Lower leg skin (tissue), 4 donors: ENCODE measurements at regions of chr16 and their contacts with region 1.

Region 1: DNA sequence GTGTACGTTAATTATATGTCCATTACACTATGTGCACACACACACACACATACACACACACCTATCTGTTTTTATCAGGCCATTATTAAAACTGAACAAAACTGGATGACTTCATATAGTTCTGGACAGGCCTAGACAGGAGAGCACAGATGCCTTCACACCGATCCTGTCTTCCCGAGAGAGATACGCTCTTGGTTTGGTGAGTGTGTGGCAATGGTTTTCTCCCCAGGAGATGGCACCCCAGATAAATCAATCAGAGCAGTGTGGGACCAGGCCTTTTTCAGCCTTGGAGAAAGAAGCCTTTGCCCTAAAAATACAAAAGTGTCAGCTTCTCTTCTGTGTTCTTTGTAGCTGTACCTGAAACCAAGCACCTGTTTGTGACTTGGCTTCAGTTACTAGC is 83.7 kb downstream of the CPPED1 start:
- DNase-seq: no peak
- H3K4me3 ChIP-seq: no peak overlapping the region
- CTCF ChIP-seq: no peak
- POLR2A ChIP-seq: no peak

Region 2: GRCh38 chr16:11915644-11916523 is 804.1 kb before region 1 on chr16 and contains the start of gene GSPT1:
- intact Hi-C with region 1: loop called (anchors 5 kb)
- DNase-seq: peak; percentile 99 to 100
- H3K4me3 ChIP-seq: peak within 1 kb of the TSS; percentile 93
- CTCF ChIP-seq: peak in 1 of 3 donors; percentile 78
- POLR2A ChIP-seq: peak in 1 of 2 donors; percentile 74
- total RNA-seq, gene GSPT1: 38.6 to 55.3 (median 52.0) TPM

Region 3: DNA sequence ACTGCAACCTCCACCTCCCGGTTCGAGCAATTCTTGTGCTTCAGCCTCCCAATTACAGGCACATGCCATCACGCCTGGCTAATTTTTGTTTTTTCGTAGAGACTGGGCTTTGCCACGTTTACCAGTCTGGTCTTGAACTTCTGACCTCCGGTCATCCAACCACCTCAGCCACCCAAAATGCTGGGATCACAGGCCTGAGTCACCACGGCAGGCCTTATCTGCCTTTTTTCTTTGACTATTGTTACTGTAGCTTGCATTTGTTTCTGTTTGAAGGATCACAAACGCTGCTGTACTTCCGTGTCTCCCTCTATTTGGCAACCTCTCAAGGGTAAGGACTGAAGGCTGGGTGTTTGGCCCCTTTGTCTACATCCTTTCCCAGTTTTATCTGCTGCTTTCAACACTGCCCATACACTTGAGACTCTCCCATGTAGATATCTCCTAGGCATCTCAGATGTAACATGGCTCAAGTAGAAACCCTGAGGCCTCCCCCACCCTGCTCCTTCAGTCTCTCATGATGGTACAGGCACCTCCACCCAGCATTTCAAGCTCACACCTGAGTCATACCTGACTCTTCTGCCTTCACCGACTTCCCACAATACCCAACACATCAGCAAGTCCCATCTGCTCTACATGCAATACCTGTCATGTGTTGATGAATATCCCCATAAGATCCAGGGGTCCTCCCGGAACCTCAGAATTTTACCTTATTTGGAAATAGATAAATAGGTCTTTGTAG is 135.3 kb before region 1 on chr16:
- intact Hi-C with region 1: no loop called
- DNase-seq: no peak
- H3K4me3 ChIP-seq: no peak overlapping the region
- CTCF ChIP-seq: no peak
- POLR2A ChIP-seq: no peak

Region 4: DNA sequence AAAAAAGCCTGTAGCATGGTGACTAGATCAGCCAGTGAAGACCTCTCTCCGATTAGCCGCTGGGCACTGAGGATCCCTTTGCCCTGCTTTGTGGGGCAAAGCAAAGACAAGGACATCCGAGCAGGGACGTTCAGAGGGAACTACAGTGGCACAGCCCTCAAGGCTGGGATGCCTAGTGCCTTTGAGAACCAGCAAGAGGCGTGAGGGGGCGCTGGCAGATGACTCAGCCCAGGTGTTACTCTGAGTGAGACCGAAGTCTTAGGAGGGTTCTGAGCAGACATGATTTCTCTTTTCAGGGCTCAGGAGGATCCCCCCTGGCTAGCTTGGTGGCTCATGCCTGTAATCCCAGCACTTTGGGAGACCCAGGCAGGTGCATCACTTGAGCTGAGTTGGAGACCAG is 94.9 kb before region 1 on chr16:
- intact Hi-C with region 1: no loop called
- DNase-seq: no peak
- H3K4me3 ChIP-seq: no peak overlapping the region
- CTCF ChIP-seq: no peak
- POLR2A ChIP-seq: no peak

Region 5: GRCh38 chr16:12703935-12704334 is 16.0 kb before region 1 on chr16:
- intact Hi-C with region 1: no loop called
- DNase-seq: peak in 1 of 2 donors; percentile 31
- H3K4me3 ChIP-seq: no peak overlapping the region
- CTCF ChIP-seq: no peak
- POLR2A ChIP-seq: no peak

Region 6: GRCh38 chr16:12803203-12804097 is 83.5 kb after region 1 on chr16 and contains the start of gene CPPED1:
- intact Hi-C with region 1: no loop called
- DNase-seq: peak; percentile 85 to 97
- H3K4me3 ChIP-seq: peak within 1 kb of the TSS; percentile 49
- CTCF ChIP-seq: peak in 1 of 3 donors; percentile 26
- POLR2A ChIP-seq: no peak
- total RNA-seq, gene CPPED1: 5.4 to 11.6 (median 8.2) TPM